ENCODE measurements at regions of chr9 and their contacts with region 1.

Region 1: GRCh38 chr9:16191691-16192402 is 639.0 kb downstream of the CCDC171 start:
- DNase-seq: peak; percentile 80 to 94 (median 92)
- ATAC-seq: peak; percentile 96
- H3K4me3 ChIP-seq: no peak overlapping the region
- H3K27ac ChIP-seq: no peak overlapping the region
- H3K4me1 ChIP-seq: peaks cover 2% of the 10 kb centered on the region
- H3K27me3 ChIP-seq: no peaks in the 10 kb centered on the region

Region 2: GRCh38 chr9:16266648-16267276 is 74.9 kb after region 1 on chr9:
- intact Hi-C with region 1: loop called in 1 of 4 experiments (anchors 10 kb)
- DNase-seq: peak in 1 of 3 donors; percentile 63
- ATAC-seq: peak in 1 of 2 donors; percentile 31
- H3K4me3 ChIP-seq: no peak overlapping the region
- H3K27ac ChIP-seq: no peak overlapping the region
- H3K4me1 ChIP-seq: no peaks in the 10 kb centered on the region
- H3K27me3 ChIP-seq: no peaks in the 10 kb centered on the region

Measured in right cardiac atrium (tissue), 5 donors.